ENCODE measurements at regions of chr15 and their contacts with region 1.

Region 1: GRCh38 chr15:50908210-50909009 is at the start of gene AP4E1:
- DNase-seq: peak; percentile 91
- ATAC-seq: peak; percentile 78
- H3K4me3 ChIP-seq: peak within 1 kb of the TSS; percentile 81
- H3K27ac ChIP-seq: peak within 1 kb of the TSS; percentile 73
- H3K4me1 ChIP-seq: peaks cover 4% of the 10 kb centered on the region; the same call in 1 of the 2 replicates
- H3K27me3 ChIP-seq: no peaks in the 10 kb centered on the region
- CTCF ChIP-seq: peak; percentile 99
- POLR2A ChIP-seq: peak; percentile 78
- RAD21 ChIP-seq: peak; percentile 99
- total RNA-seq, gene AP4E1: 6.8 and 12.8 TPM in 2 replicates

Region 2: DNA sequence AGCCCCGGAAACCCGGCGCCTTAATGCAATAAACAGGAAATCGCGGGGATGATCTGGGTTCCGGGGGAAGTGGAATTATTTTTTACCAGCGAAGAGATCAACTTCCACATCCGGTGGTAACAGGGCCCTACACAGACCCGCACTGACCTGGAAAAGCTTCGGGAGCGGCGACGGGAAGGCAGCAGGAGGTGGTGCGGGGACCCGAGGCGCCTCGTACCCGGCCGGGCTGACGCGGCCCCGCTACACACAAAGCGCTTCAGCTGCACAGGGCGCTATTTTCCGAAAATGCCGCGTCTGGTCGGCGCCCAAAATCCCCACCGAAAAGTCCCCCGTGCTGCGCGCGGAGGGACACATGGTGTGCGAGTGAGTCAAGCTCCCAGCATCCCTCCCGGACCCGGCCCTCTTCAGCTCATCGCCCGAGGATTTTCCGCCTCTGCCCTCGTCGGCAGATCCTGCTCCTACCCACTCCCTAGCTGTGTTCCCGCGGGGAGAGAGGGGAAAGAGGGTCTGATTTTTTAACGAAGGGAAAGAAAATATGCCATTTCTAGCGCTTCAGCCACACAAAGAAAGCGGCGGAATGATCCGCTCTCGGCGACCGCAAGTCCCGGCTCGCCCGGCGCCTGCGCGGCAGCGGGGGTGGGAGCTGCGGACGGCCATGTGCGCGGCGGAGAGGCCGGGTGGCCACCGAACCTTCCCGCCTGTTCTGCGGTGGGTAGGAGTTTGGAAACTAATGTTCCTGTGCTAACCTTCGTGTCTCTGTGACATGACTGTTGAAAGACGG is 553.4 kb before region 1 on chr15 and contains the start of gene GABPB1:
- CTCF ChIA-PET with region 1: no interaction called
- POLR2A ChIA-PET with region 1: no interaction called
- dilution Hi-C with region 1: no loop called
- in situ Hi-C with region 1: no loop called
- intact Hi-C with region 1: loop called (anchors 10 kb)
- DNase-seq: peak; percentile 94
- ATAC-seq: peak; percentile 66
- H3K4me3 ChIP-seq: peak within 1 kb of the TSS; percentile 60
- H3K27ac ChIP-seq: peak within 1 kb of the TSS; percentile 98
- H3K4me1 ChIP-seq: no peaks in the 10 kb centered on the region; the same call in 1 of the 2 replicates
- H3K27me3 ChIP-seq: no peaks in the 10 kb centered on the region
- CTCF ChIP-seq: no peak
- POLR2A ChIP-seq: peak; percentile 90; the same call in 1 of the 2 replicates
- RAD21 ChIP-seq: no peak
- total RNA-seq, gene GABPB1: 76.4 and 89.3 TPM in 2 replicates

Region 3: DNA sequence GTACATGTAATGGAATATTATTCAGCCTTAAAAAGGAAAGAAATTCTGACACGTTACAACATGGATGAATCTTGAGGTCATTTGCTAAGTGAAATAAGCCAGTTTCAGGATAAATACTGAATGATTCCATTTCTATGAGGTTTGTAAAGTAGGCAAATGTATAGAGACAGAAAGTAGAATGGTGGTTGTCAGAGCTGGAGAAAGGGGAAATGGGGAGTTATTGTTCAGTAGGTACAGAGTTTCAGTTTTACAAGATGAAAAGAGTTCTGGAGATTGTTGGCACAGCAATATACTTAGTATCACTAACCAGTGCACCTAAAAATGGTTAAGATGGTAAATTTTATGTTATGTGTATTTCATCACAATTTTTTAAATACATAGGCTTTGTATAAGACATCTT is 423.6 kb before region 1 on chr15:
- CTCF ChIA-PET with region 1: no interaction called
- POLR2A ChIA-PET with region 1: no interaction called
- dilution Hi-C with region 1: no loop called
- in situ Hi-C with region 1: no loop called
- intact Hi-C with region 1: loop called (anchors 10 kb)
- DNase-seq: no peak
- ATAC-seq: no peak
- H3K4me3 ChIP-seq: no peak overlapping the region
- H3K27ac ChIP-seq: no peak overlapping the region
- H3K4me1 ChIP-seq: no peaks in the 10 kb centered on the region
- H3K27me3 ChIP-seq: no peaks in the 10 kb centered on the region
- CTCF ChIP-seq: no peak
- POLR2A ChIP-seq: no peak
- RAD21 ChIP-seq: no peak

Region 4: GRCh38 chr15:50613600-50613999 is 294.8 kb before region 1 on chr15:
- CTCF ChIA-PET with region 1: no interaction called
- POLR2A ChIA-PET with region 1: no interaction called
- dilution Hi-C with region 1: no loop called
- in situ Hi-C with region 1: no loop called
- intact Hi-C with region 1: loop called (anchors 5 kb)
- DNase-seq: no peak
- ATAC-seq: no peak
- H3K4me3 ChIP-seq: no peak overlapping the region
- H3K27ac ChIP-seq: no peak overlapping the region
- H3K4me1 ChIP-seq: no peaks in the 10 kb centered on the region
- H3K27me3 ChIP-seq: no peaks in the 10 kb centered on the region
- CTCF ChIP-seq: no peak
- POLR2A ChIP-seq: no peak
- RAD21 ChIP-seq: no peak

Region 5: DNA sequence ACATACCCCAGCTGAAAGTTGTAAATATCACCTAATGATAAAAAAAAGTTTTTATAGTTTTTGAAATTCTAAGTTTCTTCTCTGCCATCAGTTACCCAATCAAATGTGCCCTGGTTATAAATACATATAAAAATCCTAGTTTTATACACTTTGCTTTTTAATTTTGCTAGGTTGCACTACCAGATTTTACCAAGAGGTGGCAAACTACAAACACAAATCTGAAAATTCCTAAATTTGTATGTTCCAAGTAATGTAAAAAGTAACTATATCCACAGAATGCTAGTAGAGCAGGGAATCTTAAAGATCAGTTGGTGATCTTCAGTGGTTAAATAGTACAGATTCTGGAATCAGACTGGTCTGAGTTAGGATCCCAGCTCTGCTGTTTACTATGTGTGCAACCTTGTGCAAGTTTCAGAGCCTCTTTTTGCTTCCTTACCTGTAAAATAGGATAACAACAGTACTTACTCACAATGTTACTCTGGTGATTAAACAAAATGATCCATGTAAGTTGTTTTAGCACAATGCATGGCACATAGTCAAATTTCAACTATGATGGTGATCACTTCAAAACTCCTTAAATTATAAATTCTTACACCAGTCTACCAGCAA is 232.8 kb before region 1 on chr15:
- CTCF ChIA-PET with region 1: no interaction called
- POLR2A ChIA-PET with region 1: interaction called, 4 read pairs
- dilution Hi-C with region 1: no loop called
- in situ Hi-C with region 1: loop called (anchors 5 kb)
- intact Hi-C with region 1: loop called (anchors 1 kb)
- DNase-seq: peak; percentile 59
- ATAC-seq: peak; percentile 53; the same call in 1 of the 2 replicates
- H3K4me3 ChIP-seq: no peak overlapping the region
- H3K27ac ChIP-seq: no peak overlapping the region
- H3K4me1 ChIP-seq: peaks cover 8% of the 10 kb centered on the region
- H3K27me3 ChIP-seq: no peaks in the 10 kb centered on the region
- CTCF ChIP-seq: peak; percentile 76
- POLR2A ChIP-seq: no peak
- RAD21 ChIP-seq: peak; percentile 71

Region 6: GRCh38 chr15:50876989-50877360 is 31.4 kb before region 1 on chr15:
- CTCF ChIA-PET with region 1: interaction called, 5 read pairs
- POLR2A ChIA-PET with region 1: no interaction called
- dilution Hi-C with region 1: no loop called
- in situ Hi-C with region 1: no loop called
- intact Hi-C with region 1: loop called (anchors 1 kb)
- DNase-seq: peak; percentile 93
- ATAC-seq: peak; percentile 90
- H3K4me3 ChIP-seq: peak overlapping the region; percentile 14; the same call in 1 of the 2 replicates
- H3K27ac ChIP-seq: no peak overlapping the region
- H3K4me1 ChIP-seq: peaks cover 7% of the 10 kb centered on the region
- H3K27me3 ChIP-seq: peaks cover 8% of the 10 kb centered on the region; the same call in 1 of the 2 replicates
- CTCF ChIP-seq: peak; percentile 96
- POLR2A ChIP-seq: 0 out of 2 replicates have a peak, but pooled peaks have one; percentile 27
- RAD21 ChIP-seq: peak; percentile 92

Region 7: DNA sequence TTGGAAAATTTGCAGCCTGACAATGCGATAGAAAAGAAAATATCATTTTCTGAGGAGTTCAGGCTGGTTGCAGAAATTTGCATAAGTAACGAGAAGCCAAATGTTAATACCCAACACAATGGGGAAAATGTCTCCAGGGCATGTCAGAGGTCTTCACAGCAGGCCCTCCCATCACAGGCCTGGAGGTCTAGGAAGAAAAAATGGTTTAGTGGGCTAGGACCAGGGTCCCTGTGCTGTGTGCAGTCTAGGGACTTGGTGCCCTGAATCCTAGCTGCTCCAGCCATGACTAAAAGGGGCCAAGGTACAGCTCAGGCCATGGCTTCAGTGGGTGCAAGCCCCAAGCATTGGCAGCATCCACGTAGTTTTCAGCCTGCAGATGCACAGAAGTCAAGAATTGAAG is 14.4 kb before region 1 on chr15:
- CTCF ChIA-PET with region 1: interaction called, 10 read pairs
- POLR2A ChIA-PET with region 1: no interaction called
- dilution Hi-C with region 1: no loop called
- in situ Hi-C with region 1: no loop called
- intact Hi-C with region 1: no loop called
- DNase-seq: no peak
- ATAC-seq: no peak
- H3K4me3 ChIP-seq: no peak overlapping the region
- H3K27ac ChIP-seq: no peak overlapping the region
- H3K4me1 ChIP-seq: no peaks in the 10 kb centered on the region
- H3K27me3 ChIP-seq: no peaks in the 10 kb centered on the region
- CTCF ChIP-seq: no peak
- POLR2A ChIP-seq: no peak
- RAD21 ChIP-seq: no peak

Measured in IMR-90 (cell line).